ENCODE measurements at regions of chr14 and their contacts with region 1.

Region 1: GRCh38 chr14:93939304-93940229 is 12.4 kb downstream of the FAM181A start:
- DNase-seq: peak; percentile 25
- ATAC-seq: peak; percentile 98
- H3K4me3 ChIP-seq: no peak overlapping the region
- H3K27ac ChIP-seq: no peak overlapping the region; the same call in 1 of the 2 replicates
- H3K4me1 ChIP-seq: peaks cover 8% of the 10 kb centered on the region
- H3K27me3 ChIP-seq: no peaks in the 10 kb centered on the region
- CTCF ChIP-seq: peak; percentile 76 to 95 (median 78); a peak in 5 of 6 replicates
- EP300 ChIP-seq: no peak
- POLR2A ChIP-seq: no peak; the same call in 1 of the 2 replicates
- RAD21 ChIP-seq: peak; percentile 80

Region 2: GRCh38 chr14:93655078-93655750 is 284.4 kb before region 1 on chr14:
- CTCF ChIA-PET with region 1: interaction called, 8 read pairs
- POLR2A ChIA-PET with region 1: no interaction called
- RAD21 ChIA-PET with region 1: interaction called, 3 read pairs
- SMC1A ChIA-PET with region 1: interaction called, 12 read pairs
- in situ Hi-C with region 1: no loop called
- intact Hi-C with region 1: no loop called
- DNase-seq: peak; percentile 3
- ATAC-seq: peak; percentile 50; the same call in 2 of the 3 replicates
- H3K4me3 ChIP-seq: no peak overlapping the region
- H3K27ac ChIP-seq: no peak overlapping the region
- H3K4me1 ChIP-seq: no peaks in the 10 kb centered on the region
- H3K27me3 ChIP-seq: no peaks in the 10 kb centered on the region
- CTCF ChIP-seq: peak; percentile 30 to 58 (median 58); a peak in 5 of 6 replicates
- EP300 ChIP-seq: no peak
- POLR2A ChIP-seq: no peak
- RAD21 ChIP-seq: peak; percentile 61

Region 3: GRCh38 chr14:93959239-93960107 is 19.9 kb after region 1 on chr14:
- CTCF ChIA-PET with region 1: interaction called, 46 read pairs
- POLR2A ChIA-PET with region 1: interaction called, 5 read pairs
- RAD21 ChIA-PET with region 1: interaction called, 43 read pairs
- SMC1A ChIA-PET with region 1: interaction called, 77 read pairs
- in situ Hi-C with region 1: no loop called
- intact Hi-C with region 1: loop called (anchors 2 kb)
- DNase-seq: peak; percentile 90
- ATAC-seq: peak; percentile 82
- H3K4me3 ChIP-seq: peak overlapping the region; percentile 11; the same call in 1 of the 2 replicates
- H3K27ac ChIP-seq: peak overlapping the region; percentile 90
- H3K4me1 ChIP-seq: peaks cover 95% of the 10 kb centered on the region
- H3K27me3 ChIP-seq: no peaks in the 10 kb centered on the region
- CTCF ChIP-seq: no peak
- EP300 ChIP-seq: peak; percentile 98 to 99
- POLR2A ChIP-seq: peak; percentile 91
- RAD21 ChIP-seq: no peak

Region 4: DNA sequence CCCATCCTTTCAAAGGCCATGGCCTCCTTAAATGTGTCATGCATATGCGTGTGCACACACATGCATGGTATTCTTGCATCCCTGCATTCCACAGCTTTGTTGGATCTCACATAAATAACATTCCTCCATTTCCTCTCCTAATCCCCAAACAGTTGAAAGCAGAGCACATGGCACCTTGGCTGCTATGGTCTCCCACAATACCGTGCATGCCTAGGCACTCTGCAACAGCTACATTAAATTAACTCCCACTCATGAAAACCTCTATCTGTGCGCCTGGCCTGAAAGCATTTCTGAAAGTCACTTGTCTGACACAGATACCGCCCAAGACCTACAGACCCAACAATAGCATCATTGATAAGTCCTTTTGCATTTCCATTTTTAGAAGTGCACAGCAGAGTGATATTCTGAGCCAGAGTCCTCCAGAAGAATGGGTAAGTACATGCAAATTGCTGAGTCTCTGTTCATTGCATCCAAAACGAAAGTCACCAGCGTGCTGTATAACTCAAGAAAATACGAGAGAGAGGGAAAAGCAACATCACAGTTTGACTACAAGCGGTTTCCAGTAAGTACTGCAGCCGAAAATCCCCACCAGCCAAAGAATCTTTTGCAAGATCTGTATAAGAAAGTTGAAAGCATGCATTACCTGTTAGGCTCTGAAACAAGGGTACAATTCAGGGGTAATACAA is 36.4 kb after region 1 on chr14:
- CTCF ChIA-PET with region 1: interaction called, 343 read pairs
- POLR2A ChIA-PET with region 1: interaction called, 11 read pairs
- RAD21 ChIA-PET with region 1: interaction called, 209 read pairs
- SMC1A ChIA-PET with region 1: interaction called, 184 read pairs
- in situ Hi-C with region 1: no loop called
- intact Hi-C with region 1: loop called (anchors 1 kb)
- DNase-seq: peak; percentile 92
- ATAC-seq: peak; percentile 73
- H3K4me3 ChIP-seq: peak overlapping the region; percentile 67; the same call in 1 of the 2 replicates
- H3K27ac ChIP-seq: peak overlapping the region; percentile 96
- H3K4me1 ChIP-seq: peaks cover 89% of the 10 kb centered on the region
- H3K27me3 ChIP-seq: no peaks in the 10 kb centered on the region
- CTCF ChIP-seq: peak; percentile 10 to 43 (median 20); a peak in 3 of 6 replicates
- EP300 ChIP-seq: peak; percentile 52 to 59; a peak in 3 of 4 replicates
- POLR2A ChIP-seq: 0 out of 2 replicates have a peak, but pooled peaks have one; percentile 18
- RAD21 ChIP-seq: peak; percentile 15; the same call in 1 of the 2 replicates

Region 5: DNA sequence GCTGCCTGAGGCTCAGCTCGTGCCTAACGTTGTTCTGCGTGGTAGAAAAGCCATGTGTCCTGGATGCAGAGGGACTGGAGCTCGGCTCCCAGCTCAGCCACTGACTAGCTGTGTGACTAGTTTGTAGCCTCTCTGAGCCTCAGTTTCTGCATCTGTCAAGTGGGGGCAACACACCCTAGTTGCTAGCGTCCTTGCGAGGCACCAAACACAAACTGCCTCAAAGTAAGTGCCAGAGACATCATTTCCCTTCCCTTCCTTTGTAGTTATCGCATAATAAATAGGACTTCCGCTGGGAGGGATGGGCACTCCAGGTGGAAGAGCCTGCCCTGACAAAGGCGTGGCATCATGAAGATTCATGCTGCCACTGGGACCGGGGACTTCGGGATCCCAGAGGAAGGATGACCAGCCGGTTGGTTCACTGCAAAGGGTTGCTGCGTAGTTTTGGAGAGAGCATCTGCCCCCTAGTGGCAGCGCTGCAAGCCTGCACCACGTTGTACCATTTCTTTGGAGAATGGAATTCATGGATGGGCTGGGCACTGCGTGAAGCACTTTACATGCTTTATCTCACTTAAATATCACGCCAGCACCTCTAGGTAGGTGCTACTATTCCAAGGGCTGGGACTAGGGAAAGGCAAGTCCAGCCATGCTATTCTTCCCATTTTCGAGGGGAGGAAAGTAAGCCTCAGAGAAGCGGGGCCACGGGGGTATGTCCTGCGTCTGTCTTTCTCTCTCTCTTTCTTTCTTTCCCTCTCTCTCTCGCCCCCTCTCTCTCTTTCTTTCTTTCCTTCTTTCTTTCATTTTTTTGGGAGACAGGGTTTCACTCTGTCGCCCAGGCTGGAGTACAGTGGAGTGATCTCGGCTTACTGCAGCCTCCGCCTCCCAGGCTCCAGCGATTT is 62.2 kb after region 1 on chr14:
- CTCF ChIA-PET with region 1: interaction called, 541 read pairs
- POLR2A ChIA-PET with region 1: interaction called, 21 read pairs
- RAD21 ChIA-PET with region 1: interaction called, 344 read pairs
- SMC1A ChIA-PET with region 1: interaction called, 180 read pairs
- in situ Hi-C with region 1: loop called (anchors 5 kb)
- intact Hi-C with region 1: loop called (anchors 1 kb)
- DNase-seq: no peak
- ATAC-seq: peak; percentile 83
- H3K4me3 ChIP-seq: no peak overlapping the region
- H3K27ac ChIP-seq: no peak overlapping the region
- H3K4me1 ChIP-seq: peaks cover 26% of the 10 kb centered on the region
- H3K27me3 ChIP-seq: no peaks in the 10 kb centered on the region
- CTCF ChIP-seq: peak; percentile 93 to 98 (median 97); a peak in 5 of 6 replicates
- EP300 ChIP-seq: no peak
- POLR2A ChIP-seq: no peak
- RAD21 ChIP-seq: peak; percentile 95

Region 6: GRCh38 chr14:94026173-94026888 is 86.8 kb after region 1 on chr14 and contains the start of gene OTUB2:
- CTCF ChIA-PET with region 1: interaction called, 27 read pairs
- POLR2A ChIA-PET with region 1: no interaction called
- RAD21 ChIA-PET with region 1: interaction called, 11 read pairs
- SMC1A ChIA-PET with region 1: interaction called, 5 read pairs
- in situ Hi-C with region 1: no loop called
- intact Hi-C with region 1: no loop called
- DNase-seq: peak; percentile 93
- ATAC-seq: peak; percentile 100
- H3K4me3 ChIP-seq: peak within 1 kb of the TSS; percentile 77
- H3K27ac ChIP-seq: no peak within 1 kb of the TSS
- H3K4me1 ChIP-seq: peaks cover 8% of the 10 kb centered on the region
- H3K27me3 ChIP-seq: no peaks in the 10 kb centered on the region
- CTCF ChIP-seq: no peak
- EP300 ChIP-seq: no peak
- POLR2A ChIP-seq: no peak
- RAD21 ChIP-seq: no peak
- polyA plus RNA-seq, gene OTUB2: 0.05 to 0.18 TPM

Region 7: DNA sequence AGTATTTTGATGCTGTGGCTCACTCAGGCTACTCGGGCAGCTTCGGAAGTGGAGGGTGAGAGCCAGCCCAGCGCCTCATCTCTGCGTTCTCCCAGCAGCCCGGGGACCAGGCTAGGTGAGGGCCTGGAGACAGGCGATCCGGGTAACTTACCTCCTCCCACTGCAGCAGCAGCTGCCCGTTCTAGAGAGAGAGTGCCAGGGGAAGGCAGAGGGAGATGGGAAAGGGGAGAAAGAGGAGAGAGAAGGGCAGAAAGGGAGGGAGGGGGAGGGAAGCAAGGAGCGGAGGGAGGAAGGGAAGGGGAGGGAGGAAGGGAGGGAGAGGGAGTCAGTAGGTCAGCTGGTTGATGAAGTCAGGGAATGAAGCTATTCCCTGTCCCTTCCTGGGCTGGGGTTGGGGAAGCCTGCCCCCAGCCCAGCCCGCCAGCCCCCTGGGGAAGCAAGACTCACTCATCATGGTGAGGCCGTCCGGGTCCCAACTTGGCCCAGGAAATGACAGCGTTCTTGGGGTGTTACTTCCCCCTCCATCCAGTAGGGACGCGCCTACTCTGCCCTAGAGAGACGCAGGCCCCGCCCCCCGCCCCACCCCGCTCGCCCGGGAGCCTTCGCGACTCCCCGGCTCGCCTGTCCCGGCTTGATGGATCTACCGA is 189.7 kb after region 1 on chr14 and contains the start of gene IFI27L2:
- CTCF ChIA-PET with region 1: interaction called, 25 read pairs
- POLR2A ChIA-PET with region 1: no interaction called
- RAD21 ChIA-PET with region 1: interaction called, 6 read pairs
- SMC1A ChIA-PET with region 1: interaction called, 14 read pairs
- in situ Hi-C with region 1: no loop called
- intact Hi-C with region 1: no loop called
- DNase-seq: no peak
- ATAC-seq: peak; percentile 98
- H3K4me3 ChIP-seq: peak within 1 kb of the TSS; percentile 99
- H3K27ac ChIP-seq: peak within 1 kb of the TSS; percentile 67
- H3K4me1 ChIP-seq: peaks cover 10% of the 10 kb centered on the region; the same call in 1 of the 2 replicates
- H3K27me3 ChIP-seq: peaks cover 0 to 4% of the 10 kb centered on the region in 2 experiments; a peak in 1 of 4 replicates
- CTCF ChIP-seq: peak; percentile 4 to 46 (median 11); a peak in 1 of 6 replicates
- EP300 ChIP-seq: no peak
- POLR2A ChIP-seq: peak; percentile 82
- RAD21 ChIP-seq: no peak
- polyA plus RNA-seq, gene IFI27L2: 26.6 to 61.2 TPM

Measured in GM12878 (cell line).